GM10248 (cell line): ENCODE measurements at regions of chr1 and their contacts with region 1.

Region 1: DNA sequence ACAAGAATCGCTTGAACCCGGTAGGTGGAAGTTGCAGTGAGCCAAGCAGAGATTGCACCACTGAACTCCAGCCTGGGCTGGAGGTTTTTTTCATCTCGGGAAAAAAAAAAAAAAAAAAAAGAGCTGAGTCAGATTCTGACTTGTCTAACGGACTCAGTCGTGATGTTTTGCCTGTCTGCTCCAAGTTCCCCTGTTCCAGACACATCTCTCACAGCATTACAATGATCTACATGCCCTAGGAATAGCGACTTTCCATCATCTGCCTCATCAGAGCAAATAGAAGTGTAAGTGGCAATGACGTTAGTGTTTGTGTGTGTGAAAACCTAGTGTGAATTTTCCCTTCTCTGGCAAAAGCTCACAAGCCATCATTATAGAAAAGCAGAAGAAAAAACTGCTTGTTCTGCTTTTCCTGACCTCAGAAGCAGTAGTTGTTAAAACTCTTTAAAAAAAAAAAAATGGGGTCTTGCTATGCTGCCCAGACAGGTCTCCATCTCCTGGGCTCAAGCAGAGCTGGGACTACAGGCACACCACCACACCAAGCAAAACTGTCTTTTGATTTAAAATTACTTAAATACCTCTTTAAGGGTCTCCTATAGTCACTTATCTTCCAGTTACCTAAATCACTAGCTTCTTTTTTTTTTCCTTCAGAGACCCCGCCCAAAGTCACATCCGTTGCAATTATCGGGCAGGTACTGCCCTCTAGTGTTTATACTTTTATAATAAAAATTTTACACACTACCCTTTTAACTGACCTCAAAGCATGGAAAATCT is 37.3 kb downstream of the PLEKHO1 start:
- DNase-seq: peak; percentile 51
- CTCF ChIP-seq: no peak

Region 2: GRCh38 chr1:149886396-149887195 is 300.4 kb before region 1 on chr1:
- CTCF ChIA-PET with region 1: interaction called, 14 read pairs
- POLR2A ChIA-PET with region 1: interaction called, 13 read pairs
- DNase-seq: peak; percentile 90
- CTCF ChIP-seq: no peak

Region 3: GRCh38 chr1:150072959-150073358 is 114.0 kb before region 1 on chr1:
- CTCF ChIA-PET with region 1: interaction called, 26 read pairs
- POLR2A ChIA-PET with region 1: interaction called, 10 read pairs
- DNase-seq: peak; percentile 46
- CTCF ChIP-seq: peak; percentile 37

Region 4: GRCh38 chr1:150168960-150169601 is 17.9 kb before region 1 on chr1:
- CTCF ChIA-PET with region 1: interaction called, 15 read pairs
- POLR2A ChIA-PET with region 1: no interaction called
- DNase-seq: peak; percentile 77
- CTCF ChIP-seq: peak; percentile 81

Region 5: GRCh38 chr1:150207281-150207971 is 20.5 kb after region 1 on chr1:
- CTCF ChIA-PET with region 1: interaction called, 13 read pairs
- POLR2A ChIA-PET with region 1: no interaction called
- DNase-seq: no peak
- CTCF ChIP-seq: no peak